Ovary (tissue), 10 donors: ENCODE measurements at regions of chr7 and their contacts with region 1.

Region 1: GRCh38 chr7:95916573-95917297 is 144.4 kb downstream of the DYNC1I1 start:
- DNase-seq: peak; percentile 74 to 92 (median 90)
- H3K4me3 ChIP-seq: no peak overlapping the region
- H3K27ac ChIP-seq: peak overlapping the region in 1 of 2 donors; percentile 51
- H3K4me1 ChIP-seq: peaks cover 2% of the 10 kb centered on the region
- H3K27me3 ChIP-seq: no peaks in the 10 kb centered on the region
- CTCF ChIP-seq: peak; percentile 72 to 86 (median 85)
- EP300 ChIP-seq: no peak
- POLR2A ChIP-seq: no peak

Region 2: DNA sequence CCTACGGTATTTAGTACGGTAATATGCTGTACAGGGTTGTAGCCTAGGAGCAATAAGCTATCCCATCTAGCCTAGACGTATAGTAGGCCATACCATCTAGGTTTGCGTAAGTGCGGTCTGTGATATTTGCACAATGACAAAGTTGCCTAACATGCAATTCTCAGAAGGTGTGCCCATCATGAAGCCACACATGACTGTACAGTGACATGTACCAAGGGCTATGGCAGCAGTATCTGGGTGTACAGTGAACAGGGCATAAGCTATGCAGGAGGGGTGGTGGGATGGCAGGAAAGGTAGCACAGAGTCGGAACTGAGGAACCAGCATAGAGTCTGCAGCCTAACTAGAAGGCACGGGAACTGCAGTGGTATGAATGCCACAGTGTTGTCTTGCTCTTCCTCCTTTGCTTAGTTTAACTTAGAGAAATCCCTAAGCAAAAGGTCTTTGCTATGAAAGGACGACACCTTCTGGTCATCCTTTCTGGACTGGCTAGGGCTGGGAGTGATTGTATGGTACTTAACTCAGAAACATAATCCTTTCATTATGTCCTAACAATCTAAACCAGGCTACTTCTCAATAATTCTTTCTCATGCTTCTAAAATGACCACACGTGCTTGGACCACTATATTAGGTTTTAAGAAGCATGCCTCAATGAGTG is 50.9 kb before region 1 on chr7:
- intact Hi-C with region 1: no loop called
- DNase-seq: no peak
- H3K4me3 ChIP-seq: no peak overlapping the region
- H3K27ac ChIP-seq: no peak overlapping the region
- H3K4me1 ChIP-seq: no peaks in the 10 kb centered on the region
- H3K27me3 ChIP-seq: no peaks in the 10 kb centered on the region
- CTCF ChIP-seq: no peak
- EP300 ChIP-seq: no peak
- POLR2A ChIP-seq: no peak

Region 3: DNA sequence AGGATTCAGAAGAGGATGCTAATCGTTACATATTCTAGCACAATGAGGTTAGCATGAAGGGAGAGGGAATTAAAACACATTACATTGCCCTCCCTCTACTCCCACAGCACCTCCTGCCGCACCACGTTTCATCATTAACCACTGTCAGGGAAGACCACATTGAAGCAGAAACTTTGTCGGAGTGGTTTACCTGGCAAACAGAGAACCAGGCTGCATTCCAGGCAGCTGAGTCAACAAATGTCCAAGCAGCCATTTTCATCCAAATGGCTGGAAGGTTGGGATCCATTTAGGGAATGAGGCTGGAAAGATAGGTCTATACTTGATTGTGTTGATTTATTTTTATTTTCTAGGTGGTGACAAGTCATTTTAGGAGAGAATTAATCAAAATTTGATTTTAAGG is 129.2 kb after region 1 on chr7:
- intact Hi-C with region 1: loop called in 1 of 4 experiments (anchors 10 kb)
- DNase-seq: peak in 1 of 5 donors; percentile 16
- H3K4me3 ChIP-seq: no peak overlapping the region
- H3K27ac ChIP-seq: peak overlapping the region in 1 of 2 donors; percentile 73
- H3K4me1 ChIP-seq: peaks cover 4% of the 10 kb centered on the region
- H3K27me3 ChIP-seq: no peaks in the 10 kb centered on the region
- CTCF ChIP-seq: no peak
- EP300 ChIP-seq: no peak
- POLR2A ChIP-seq: no peak

Region 4: GRCh38 chr7:96075510-96076349 is 159.0 kb after region 1 on chr7:
- intact Hi-C with region 1: loop called in 1 of 4 experiments (anchors 10 kb)
- DNase-seq: peak; percentile 72 to 83 (median 78)
- H3K4me3 ChIP-seq: peak overlapping the region; percentile 46
- H3K27ac ChIP-seq: peak overlapping the region in 1 of 2 donors; percentile 64
- H3K4me1 ChIP-seq: no peaks in the 10 kb centered on the region
- H3K27me3 ChIP-seq: no peaks in the 10 kb centered on the region
- CTCF ChIP-seq: peak; percentile 67 to 74 (median 71)
- EP300 ChIP-seq: no peak
- POLR2A ChIP-seq: no peak